Motor neuron (in vitro differentiated cells): ENCODE measurements at regions of chr6 and their contacts with region 1.

Region 1: GRCh38 chr6:68639826-68640490 is 4.9 kb downstream of the ADGRB3 start:
- ATAC-seq: no peak
- H3K4me3 ChIP-seq: peak overlapping the region in 4 of 5 donors; percentile 4 to 20 (median 10)
- H3K27ac ChIP-seq: no peak overlapping the region
- H3K4me1 ChIP-seq: peaks cover 12 to 26% of the 10 kb centered on the region in 2 donors

Region 2: DNA sequence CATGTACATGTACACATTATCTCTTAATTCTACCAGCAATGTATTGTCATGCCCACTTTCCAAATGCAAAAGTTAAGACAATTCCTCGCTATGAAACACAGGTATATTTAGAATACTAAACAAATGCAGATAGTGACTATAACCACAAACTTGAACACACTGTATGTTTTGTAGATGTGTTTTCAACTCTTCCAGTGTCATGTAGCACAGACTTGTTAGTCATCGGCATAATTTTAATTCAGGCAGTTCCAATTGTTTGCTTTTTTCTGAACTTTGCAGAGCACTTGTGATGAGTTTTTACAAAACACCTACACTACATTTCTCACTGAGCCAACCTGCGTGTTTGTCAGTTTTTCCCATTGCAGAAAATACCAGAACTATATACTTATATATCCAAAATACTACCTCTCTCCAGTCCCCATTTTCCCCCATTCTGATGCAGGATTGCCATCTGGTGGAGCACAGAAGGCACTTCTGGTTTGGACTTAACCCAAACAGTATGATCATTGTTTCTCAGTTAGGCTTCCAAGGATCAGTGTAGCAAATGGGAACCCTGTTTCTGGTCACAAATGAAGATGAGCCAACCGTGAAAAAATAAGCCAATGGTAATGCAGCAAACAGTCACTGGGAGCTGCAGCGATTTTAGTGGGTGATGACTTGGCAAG is 138.5 kb after region 1 on chr6:
- in situ Hi-C with region 1: loop called in 3 of 9 experiments (anchors 10 kb)
- ATAC-seq: peak; percentile 53 to 78 (median 64)
- H3K4me3 ChIP-seq: no peak overlapping the region
- H3K27ac ChIP-seq: no peak overlapping the region
- H3K4me1 ChIP-seq: peaks cover 7 to 25% of the 10 kb centered on the region in 2 donors